CD14-positive monocyte (primary cell): ENCODE measurements at regions of chr11 and their contacts with region 1.

Region 1: DNA sequence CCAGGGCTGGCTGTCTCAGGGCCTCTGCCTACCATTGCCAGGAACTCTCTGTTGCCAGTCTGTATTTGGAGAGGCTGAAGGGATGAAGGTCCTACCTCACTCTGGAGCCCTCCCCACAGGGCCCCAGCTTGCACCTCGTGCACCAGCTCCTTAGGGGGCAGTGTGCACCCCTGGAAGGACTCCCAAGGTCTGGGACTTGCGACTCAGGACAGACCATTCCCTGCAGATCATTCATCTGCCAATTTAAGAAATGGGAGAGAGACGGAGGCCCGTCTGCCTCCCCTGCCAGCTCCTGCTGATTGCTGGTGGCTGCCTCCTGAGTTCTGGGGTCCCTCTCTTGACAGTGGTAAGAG is 27.5 kb upstream of the MALAT1 start:
- DNase-seq: peak in 2 of 3 donors; percentile 69 to 82
- H3K4me3 ChIP-seq: peak overlapping the region; percentile 9 to 64 (median 11)
- H3K4me3 Mint-ChIP-seq: peak overlapping the region; percentile 71 to 78
- H3K27ac ChIP-seq: peak overlapping the region; percentile 79 to 92
- H3K27ac Mint-ChIP-seq: peak overlapping the region; percentile 90 to 98 (median 96)
- H3K4me1 ChIP-seq: peaks cover 26 to 28% of the 10 kb centered on the region in 2 donors
- H3K4me1 Mint-ChIP-seq: peaks cover 34% of the 10 kb centered on the region
- H3K27me3 ChIP-seq: no peaks in the 10 kb centered on the region
- H3K27me3 Mint-ChIP-seq: peaks cover 0 to 3% (median 1%) of the 10 kb centered on the region in 3 donors
- CTCF ChIP-seq: peak; percentile 65

Region 2: GRCh38 chr11:65454696-65455456 is 16.5 kb before region 1 on chr11:
- intact Hi-C with region 1: loop called in 1 of 2 experiments (anchors 2 kb)
- DNase-seq: peak; percentile 83 to 86 (median 85)
- H3K4me3 ChIP-seq: peak overlapping the region; percentile 37 to 76 (median 48)
- H3K4me3 Mint-ChIP-seq: peak overlapping the region; percentile 92 to 93
- H3K27ac ChIP-seq: peak overlapping the region; percentile 54 to 77
- H3K27ac Mint-ChIP-seq: peak overlapping the region; percentile 89 to 98 (median 95)
- H3K4me1 ChIP-seq: peaks cover 33 to 35% of the 10 kb centered on the region in 2 donors
- H3K4me1 Mint-ChIP-seq: peaks cover 47% of the 10 kb centered on the region
- H3K27me3 ChIP-seq: no peaks in the 10 kb centered on the region
- H3K27me3 Mint-ChIP-seq: peaks cover 0 to 11% (median 2%) of the 10 kb centered on the region in 3 donors
- CTCF ChIP-seq: no peak

Region 3: DNA sequence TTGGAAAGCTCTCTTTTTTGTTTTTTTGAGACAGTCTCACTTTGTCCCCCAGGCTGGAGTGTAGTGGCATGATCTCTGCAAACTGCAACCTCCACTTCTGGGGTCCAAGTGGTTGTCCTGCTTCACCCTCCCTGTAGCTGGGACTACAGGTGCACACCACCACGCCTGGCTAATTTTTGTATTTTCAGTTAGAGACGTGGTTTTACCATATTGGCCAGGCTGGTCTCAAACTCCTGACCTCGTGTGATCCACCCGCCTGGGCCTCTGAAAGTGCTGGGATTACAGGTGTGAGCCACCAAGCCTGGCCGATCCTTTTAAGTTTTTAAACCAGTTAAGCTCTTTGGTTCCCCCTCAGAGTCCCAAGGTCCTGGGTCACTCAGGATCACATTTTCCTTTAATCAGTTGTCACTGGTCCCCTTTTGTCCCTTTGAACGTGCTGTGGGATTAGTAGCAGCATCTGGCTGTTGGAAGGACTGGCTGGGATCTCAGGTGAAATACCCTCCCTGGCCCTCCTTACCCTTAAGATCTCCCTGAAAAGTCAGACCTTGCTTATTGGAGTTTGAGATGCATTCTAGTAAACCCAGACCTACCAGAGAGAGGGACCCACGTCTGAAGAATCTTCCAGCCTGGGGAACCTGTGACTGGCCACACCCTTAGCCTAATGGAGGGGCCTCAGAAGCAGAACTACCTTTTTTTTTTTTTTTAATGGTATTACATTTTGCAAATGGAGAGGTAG is 35.6 kb after region 1 on chr11:
- intact Hi-C with region 1: loop called (anchors 2 to 5 kb)
- DNase-seq: peak in 1 of 3 donors; percentile 82
- H3K4me3 ChIP-seq: peak overlapping the region; percentile 96 to 100 (median 99)
- H3K4me3 Mint-ChIP-seq: peak overlapping the region in 1 of 2 donors; percentile 96
- H3K27ac ChIP-seq: peak overlapping the region; percentile 90 to 98
- H3K27ac Mint-ChIP-seq: peak overlapping the region in 5 of 7 donors; percentile 95 to 99 (median 98)
- H3K4me1 ChIP-seq: peaks cover 56 to 58% of the 10 kb centered on the region in 2 donors
- H3K4me1 Mint-ChIP-seq: peaks cover 57% of the 10 kb centered on the region
- H3K27me3 ChIP-seq: no peaks in the 10 kb centered on the region
- H3K27me3 Mint-ChIP-seq: peaks cover 0 to 2% (median 2%) of the 10 kb centered on the region in 3 donors
- CTCF ChIP-seq: no peak